Heart right ventricle (tissue), 16 donors: ENCODE measurements at regions of chr12 and their contacts with region 1.

Region 1: GRCh38 chr12:68665016-68665569 is 21.7 kb upstream of the NUP107 start:
- DNase-seq: no peak
- ATAC-seq: peak; percentile 56 to 89 (median 76)
- H3K4me3 ChIP-seq: no peak overlapping the region
- H3K27ac ChIP-seq: peak overlapping the region in 3 of 10 donors; percentile 10 to 30 (median 29)
- H3K4me1 ChIP-seq: peaks cover 0 to 9% (median 5%) of the 10 kb centered on the region in 9 donors
- H3K27me3 ChIP-seq: no peaks in the 10 kb centered on the region
- CTCF ChIP-seq: peak in 5 of 9 donors; percentile 13 to 52 (median 41)

Region 2: GRCh38 chr12:68358532-68359485 is 306.3 kb before region 1 on chr12:
- intact Hi-C with region 1: loop called in 3 of 10 experiments (anchors 5 to 10 kb)
- DNase-seq: peak in 1 of 2 donors; percentile 79
- ATAC-seq: peak; percentile 65 to 92 (median 87)
- H3K4me3 ChIP-seq: no peak overlapping the region
- H3K27ac ChIP-seq: peak overlapping the region in 1 of 10 donors; percentile 64
- H3K4me1 ChIP-seq: peaks cover 0 to 31% (median 13%) of the 10 kb centered on the region in 9 donors
- H3K27me3 ChIP-seq: no peaks in the 10 kb centered on the region
- CTCF ChIP-seq: peak; percentile 56 to 78 (median 74)

Region 3: DNA sequence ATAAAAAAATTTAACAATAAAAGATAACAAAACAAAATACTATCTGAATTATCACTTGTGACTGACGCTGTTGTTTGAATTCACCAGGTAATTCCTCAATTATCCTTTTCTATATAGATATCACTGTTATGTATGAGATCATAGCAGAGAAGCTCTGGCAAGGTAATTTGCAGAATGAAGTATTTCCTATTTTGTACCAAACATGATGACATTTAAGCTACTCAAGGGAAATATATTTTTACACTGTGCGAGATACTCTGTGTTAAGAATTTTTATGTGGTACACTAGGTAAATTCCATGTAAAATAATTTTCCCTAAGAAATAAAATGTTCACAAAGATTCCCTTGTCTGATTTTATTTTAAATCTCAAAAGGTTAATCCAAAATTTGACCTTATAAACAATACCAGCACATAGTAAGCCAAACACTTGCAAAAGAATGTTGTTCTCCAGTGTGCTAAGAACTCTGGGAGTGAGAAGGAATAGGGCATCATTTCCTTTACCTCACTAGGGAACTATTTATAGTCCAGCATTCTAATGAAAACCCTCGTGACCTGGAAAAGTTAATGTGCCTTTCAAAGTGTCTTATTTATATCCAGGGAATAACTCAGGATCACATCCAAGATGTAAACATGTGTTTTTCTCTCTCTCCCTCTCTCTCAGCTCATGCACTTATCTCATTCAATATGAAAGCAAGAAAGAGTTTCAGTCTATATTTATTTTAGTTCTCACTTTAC is 169.6 kb before region 1 on chr12:
- intact Hi-C with region 1: no loop called
- DNase-seq: no peak
- ATAC-seq: peak; percentile 61 to 94 (median 84)
- H3K4me3 ChIP-seq: no peak overlapping the region
- H3K27ac ChIP-seq: peak overlapping the region in 7 of 10 donors; percentile 8 to 64 (median 51)
- H3K4me1 ChIP-seq: peaks cover 0 to 21% (median 13%) of the 10 kb centered on the region in 9 donors
- H3K27me3 ChIP-seq: no peaks in the 10 kb centered on the region
- CTCF ChIP-seq: no peak